ENCODE measurements at regions of chr3 and their contacts with region 1.

Region 1: DNA sequence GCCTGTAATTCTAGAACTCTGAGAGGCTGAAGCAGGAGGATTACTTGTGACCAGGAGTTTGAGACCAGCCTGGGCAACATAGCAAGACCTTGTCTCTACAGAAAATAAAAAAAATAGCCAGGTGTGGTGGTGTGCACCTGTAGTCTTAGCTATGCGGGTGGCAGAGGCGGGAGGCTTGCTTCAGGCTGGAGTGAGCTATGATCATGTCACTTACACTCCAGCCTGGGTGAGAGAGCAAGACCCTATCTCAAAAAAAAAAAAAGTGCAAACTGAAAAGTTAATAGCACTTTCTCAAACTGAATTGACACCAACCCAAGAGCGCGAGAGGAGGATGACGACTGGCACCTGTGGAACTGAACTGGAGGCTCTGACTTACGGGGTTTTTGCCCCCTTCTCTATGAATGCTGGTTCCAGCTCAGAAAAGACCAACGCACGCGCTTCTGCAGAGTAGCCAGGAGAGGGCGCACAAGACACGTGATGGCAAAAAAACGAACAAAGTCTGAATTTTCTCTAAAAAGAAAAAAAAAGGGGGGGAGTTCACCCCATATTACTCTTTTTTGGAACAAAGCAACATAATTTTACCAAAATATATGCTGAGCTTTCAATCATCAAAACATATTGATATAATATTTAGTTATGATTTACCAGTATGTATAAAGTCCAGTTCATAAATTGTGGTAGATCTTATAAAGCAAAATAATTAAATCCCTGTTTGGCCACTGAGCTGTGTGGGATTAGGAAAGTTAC is 23.7 kb downstream of the CFAP92 start:
- DNase-seq: peak; percentile 55
- H3K4me3 ChIP-seq: no peak overlapping the region
- H3K27ac ChIP-seq: no peak overlapping the region
- H3K4me1 ChIP-seq: no peaks in the 10 kb centered on the region
- H3K27me3 ChIP-seq: no peaks in the 10 kb centered on the region
- CTCF ChIP-seq: peak; percentile 80 to 89
- POLR2A ChIP-seq: no peak

Region 2: GRCh38 chr3:128950223-128950938 is 19.8 kb before region 1 on chr3:
- CTCF ChIA-PET with region 1: interaction called, 13 read pairs
- POLR2A ChIA-PET with region 1: no interaction called
- dilution Hi-C with region 1: no loop called
- intact Hi-C with region 1: no loop called
- DNase-seq: peak; percentile 58
- H3K4me3 ChIP-seq: no peak overlapping the region
- H3K27ac ChIP-seq: no peak overlapping the region
- H3K4me1 ChIP-seq: no peaks in the 10 kb centered on the region
- H3K27me3 ChIP-seq: peaks cover 0 to 8% of the 10 kb centered on the region in 2 experiments
- CTCF ChIP-seq: peak in 1 of 2 donors; percentile 52
- POLR2A ChIP-seq: no peak

Region 3: DNA sequence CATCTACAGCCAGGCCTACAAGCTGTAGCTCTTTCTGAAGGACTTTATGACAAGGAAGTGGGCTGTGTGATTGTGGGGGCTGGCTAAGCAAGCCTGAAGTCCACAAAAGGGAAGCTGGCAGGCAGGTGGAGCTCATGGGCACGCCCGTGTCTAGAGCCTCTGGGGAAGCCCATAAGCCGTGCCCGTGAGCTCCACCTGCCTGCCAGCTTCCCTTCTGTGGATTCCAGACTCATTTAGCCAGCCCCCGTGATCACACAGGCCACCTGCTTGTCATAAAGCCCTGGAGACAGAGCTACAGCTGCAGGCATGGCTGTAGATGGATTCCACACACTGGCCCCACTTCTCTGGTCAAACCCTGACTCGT is 46.2 kb after region 1 on chr3:
- CTCF ChIA-PET with region 1: interaction called, 54 read pairs
- POLR2A ChIA-PET with region 1: no interaction called
- dilution Hi-C with region 1: no loop called
- intact Hi-C with region 1: no loop called
- DNase-seq: peak; percentile 45
- H3K4me3 ChIP-seq: peak overlapping the region in 1 of 3 experiments; percentile 2
- H3K27ac ChIP-seq: peak overlapping the region; percentile 86
- H3K4me1 ChIP-seq: peaks cover 33% of the 10 kb centered on the region
- H3K27me3 ChIP-seq: no peaks in the 10 kb centered on the region
- CTCF ChIP-seq: no peak
- POLR2A ChIP-seq: no peak

Region 4: GRCh38 chr3:129068291-129068886 is 98.2 kb after region 1 on chr3:
- CTCF ChIA-PET with region 1: interaction called, 19 read pairs
- POLR2A ChIA-PET with region 1: no interaction called
- dilution Hi-C with region 1: no loop called
- intact Hi-C with region 1: no loop called
- DNase-seq: peak; percentile 44
- H3K4me3 ChIP-seq: peak overlapping the region in 1 of 3 experiments; percentile 28
- H3K27ac ChIP-seq: no peak overlapping the region
- H3K4me1 ChIP-seq: peaks cover 4% of the 10 kb centered on the region
- H3K27me3 ChIP-seq: no peaks in the 10 kb centered on the region
- CTCF ChIP-seq: no peak
- POLR2A ChIP-seq: peak; percentile 27

Region 5: GRCh38 chr3:129120254-129121004 is 150.3 kb after region 1 on chr3:
- CTCF ChIA-PET with region 1: interaction called, 79 read pairs
- POLR2A ChIA-PET with region 1: no interaction called
- dilution Hi-C with region 1: no loop called
- intact Hi-C with region 1: no loop called
- DNase-seq: peak; percentile 87
- H3K4me3 ChIP-seq: peak overlapping the region; percentile 64 to 79 (median 66)
- H3K27ac ChIP-seq: peak overlapping the region; percentile 66
- H3K4me1 ChIP-seq: peaks cover 27% of the 10 kb centered on the region
- H3K27me3 ChIP-seq: no peaks in the 10 kb centered on the region
- CTCF ChIP-seq: peak in 1 of 2 donors; percentile 22
- POLR2A ChIP-seq: peak; percentile 79

Region 6: DNA sequence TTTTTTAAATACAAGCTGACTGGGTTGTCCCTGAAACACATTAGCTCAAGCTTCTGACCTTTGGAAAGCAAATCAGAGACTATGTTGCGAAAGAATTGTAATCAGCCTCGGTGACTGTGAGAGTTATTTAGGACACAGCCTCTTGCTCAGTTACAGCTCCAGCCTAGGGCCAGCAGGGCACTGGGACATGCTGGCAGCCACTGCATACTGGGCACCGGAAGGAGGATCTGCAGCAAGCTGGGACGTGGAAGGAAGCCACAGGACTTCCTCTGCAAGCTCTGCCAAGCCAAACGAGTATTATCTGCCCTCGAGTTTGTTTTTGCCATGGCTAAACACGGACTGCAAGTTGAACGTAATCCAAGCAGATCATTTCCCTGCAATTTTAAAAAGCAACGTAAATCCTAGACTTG is 254.8 kb after region 1 on chr3:
- CTCF ChIA-PET with region 1: interaction called, 10 read pairs
- POLR2A ChIA-PET with region 1: no interaction called
- dilution Hi-C with region 1: no loop called
- intact Hi-C with region 1: no loop called
- DNase-seq: peak; percentile 71
- H3K4me3 ChIP-seq: peak overlapping the region in 1 of 3 experiments; percentile 16
- H3K27ac ChIP-seq: peak overlapping the region; percentile 9
- H3K4me1 ChIP-seq: peaks cover 45% of the 10 kb centered on the region
- H3K27me3 ChIP-seq: no peaks in the 10 kb centered on the region
- CTCF ChIP-seq: no peak
- POLR2A ChIP-seq: no peak